Dorsolateral prefrontal cortex (tissue), 120 donors: ENCODE measurements at regions of chrX and their contacts with region 1.

Region 1: DNA sequence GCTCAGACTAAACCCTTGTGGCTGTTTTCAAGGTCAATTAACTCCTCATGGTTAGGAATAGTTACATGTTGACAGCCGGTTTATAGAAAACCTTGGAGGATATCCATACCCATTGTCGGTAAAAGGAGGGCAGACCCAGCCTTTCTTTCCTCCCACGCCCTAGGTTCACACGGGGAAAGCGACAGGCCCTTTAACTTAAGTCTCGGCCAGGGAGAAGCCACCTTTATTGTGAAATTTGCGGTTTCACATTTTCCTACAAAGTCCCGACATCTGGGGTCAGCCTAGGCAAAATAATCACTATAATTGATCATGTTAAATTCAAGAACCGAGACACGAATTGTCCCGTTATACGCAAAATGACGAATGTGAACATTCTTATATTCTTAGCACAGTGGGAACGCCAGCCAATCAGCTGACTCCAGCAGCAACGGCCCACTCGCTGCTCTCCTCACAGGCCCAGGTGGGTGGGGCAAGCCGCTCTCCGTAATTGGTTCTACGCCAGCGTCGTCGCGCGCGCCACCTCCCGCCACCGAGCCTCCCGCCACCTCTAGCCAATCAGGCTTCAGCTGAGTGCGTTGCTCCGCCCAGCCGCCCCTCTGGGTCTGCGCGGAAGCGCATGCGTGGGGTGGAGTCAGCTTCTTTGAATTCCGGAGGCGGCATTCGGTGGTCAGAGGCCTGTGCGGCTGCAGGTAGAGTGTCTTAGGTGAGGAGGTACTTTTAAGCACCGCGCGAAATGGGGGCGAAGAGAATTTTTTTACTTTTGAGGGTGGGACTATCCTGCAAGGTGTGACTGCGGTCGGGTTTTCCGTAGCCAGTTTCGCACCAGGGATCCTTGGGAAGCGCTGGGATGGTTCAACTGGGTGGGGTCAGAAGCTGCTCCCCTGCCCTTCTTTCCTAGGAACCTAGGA is at the start of gene CENPI:
- DNase-seq: peak; percentile 75 to 93 (median 90)
- H3K4me3 ChIP-seq: peak within 1 kb of the TSS; percentile 3 to 68 (median 55)
- H3K27ac ChIP-seq: peak within 1 kb of the TSS in 48 of 59 donors; percentile 2 to 91 (median 70)
- H3K27me3 ChIP-seq: peaks cover 0 to 43% (median 3%) of the 10 kb centered on the region in 45 donors
- CTCF ChIP-seq: peak in 13 of 56 donors; percentile 4 to 35 (median 21)
- total RNA-seq, gene CENPI: 0.75 to 4.4 (median 2.0) TPM

Region 2: GRCh38 chrX:100812216-100813158 is 285.3 kb before region 1 on chrX:
- intact Hi-C with region 1: loop called in 1 of 2 experiments (anchors 5 kb)
- DNase-seq: no peak
- H3K4me3 ChIP-seq: no peak overlapping the region
- H3K27ac ChIP-seq: no peak overlapping the region
- H3K27me3 ChIP-seq: peaks cover 0 to 70% (median 19%) of the 10 kb centered on the region in 45 donors
- CTCF ChIP-seq: no peak

Region 3: GRCh38 chrX:101051549-101052302 is 46.1 kb before region 1 on chrX and contains the start of gene TRMT2B:
- intact Hi-C with region 1: loop called in 1 of 2 experiments (anchors 5 kb)
- DNase-seq: peak; percentile 28 to 77 (median 64)
- H3K4me3 ChIP-seq: peak within 1 kb of the TSS; percentile 29 to 78 (median 64)
- H3K27ac ChIP-seq: peak within 1 kb of the TSS in 44 of 59 donors; percentile 13 to 83 (median 60)
- H3K27me3 ChIP-seq: peaks cover 0 to 34% (median 0%) of the 10 kb centered on the region in 45 donors
- CTCF ChIP-seq: no peak
- total RNA-seq, gene TRMT2B: 10.1 to 22.8 (median 16.6) TPM

Region 4: DNA sequence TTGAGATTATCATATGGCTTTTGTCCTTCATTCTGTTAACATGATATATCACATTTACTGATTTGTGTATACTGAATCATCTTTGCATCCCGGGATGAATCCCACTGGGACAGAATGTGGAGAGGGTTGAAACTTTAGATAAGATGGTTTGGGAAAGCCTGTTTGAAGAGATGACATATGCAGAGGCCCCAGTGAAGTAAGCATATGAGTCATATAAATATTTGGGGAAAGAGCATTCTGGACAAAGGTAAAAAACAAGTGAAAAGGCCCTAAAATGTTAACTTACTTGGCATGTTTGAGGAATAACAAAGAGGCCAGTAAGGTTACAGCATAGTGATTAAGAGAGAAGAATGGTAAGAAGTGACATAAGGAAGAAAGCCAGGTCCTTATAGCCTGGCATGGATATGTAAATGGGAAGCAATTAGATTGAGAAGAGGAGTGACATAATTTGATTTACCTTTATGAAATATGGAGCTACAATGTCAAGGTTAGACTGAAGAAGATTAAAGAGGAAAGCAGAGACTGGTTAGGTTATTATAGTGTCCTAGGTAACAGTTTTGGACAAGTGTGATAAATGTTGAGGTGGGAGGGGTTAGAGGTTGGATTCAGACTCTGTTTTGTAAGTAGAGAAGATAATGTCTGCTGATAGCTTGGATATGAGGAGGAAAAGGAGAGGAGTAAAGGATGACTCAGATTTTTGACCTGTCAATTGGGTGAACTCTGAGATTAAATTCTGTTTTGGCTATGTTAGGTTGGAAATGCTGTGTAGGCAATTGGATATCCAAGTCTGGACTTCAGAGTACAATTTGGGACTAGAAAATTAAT is 67.2 kb after region 1 on chrX:
- intact Hi-C with region 1: no loop called
- DNase-seq: no peak
- H3K4me3 ChIP-seq: no peak overlapping the region
- H3K27ac ChIP-seq: no peak overlapping the region
- H3K27me3 ChIP-seq: peaks cover 0 to 68% (median 13%) of the 10 kb centered on the region in 45 donors
- CTCF ChIP-seq: no peak

Region 5: DNA sequence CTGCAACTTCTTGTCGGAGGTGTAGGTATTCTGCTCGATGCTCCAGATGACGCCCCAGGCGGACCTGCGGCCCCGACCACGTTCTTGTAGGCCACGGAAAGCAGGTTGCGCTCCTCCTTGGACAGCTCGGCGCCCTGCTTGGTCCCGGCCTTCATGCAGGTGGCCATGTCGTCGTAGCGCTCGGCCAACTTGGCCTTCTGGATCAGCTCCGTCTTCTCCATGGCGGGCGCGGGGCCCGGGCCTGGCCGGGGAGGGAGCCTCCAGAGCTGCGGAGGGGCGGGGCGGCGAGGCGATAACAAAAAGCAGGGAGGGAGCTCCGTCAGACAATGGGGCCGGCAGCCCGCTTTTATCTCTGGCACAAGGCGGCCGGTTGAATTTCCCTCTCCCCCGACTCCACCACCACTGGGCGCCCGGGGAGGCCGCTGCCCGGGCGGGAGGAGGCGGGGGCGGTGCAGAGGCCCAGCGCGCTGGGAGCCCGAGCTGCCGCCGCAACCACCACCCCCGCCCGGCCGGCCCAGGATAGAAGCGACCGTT is 93.5 kb after region 1 on chrX:
- intact Hi-C with region 1: no loop called
- DNase-seq: peak in 2 of 10 donors; percentile 3 to 33
- H3K4me3 ChIP-seq: peak overlapping the region in 33 of 59 donors; percentile 2 to 46 (median 23)
- H3K27ac ChIP-seq: no peak overlapping the region
- H3K27me3 ChIP-seq: peaks cover 0 to 77% (median 27%) of the 10 kb centered on the region in 45 donors
- CTCF ChIP-seq: no peak

Region 6: DNA sequence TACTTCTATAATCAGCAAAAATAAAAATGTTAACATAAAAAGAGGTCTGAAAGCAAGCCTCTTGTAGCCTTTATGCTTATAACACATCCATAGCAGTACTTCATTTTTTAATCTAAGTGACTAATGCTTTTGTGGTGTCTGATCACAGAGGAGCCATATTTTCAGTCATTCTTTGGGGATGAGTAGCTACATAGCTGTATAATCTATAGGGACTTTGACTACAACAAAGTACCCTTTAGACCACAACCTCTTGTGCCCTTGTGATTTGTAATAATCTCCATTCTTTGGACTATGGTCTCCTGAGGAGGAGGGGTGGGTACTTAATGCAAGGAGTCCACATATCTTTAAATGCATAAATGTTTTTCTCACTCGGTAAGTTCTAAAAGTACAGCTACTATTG is 131.4 kb after region 1 on chrX:
- intact Hi-C with region 1: no loop called
- DNase-seq: no peak
- H3K4me3 ChIP-seq: no peak overlapping the region
- H3K27ac ChIP-seq: peak overlapping the region in 7 of 59 donors; percentile 12 to 60 (median 22)
- H3K27me3 ChIP-seq: peaks cover 0 to 89% (median 33%) of the 10 kb centered on the region in 45 donors
- CTCF ChIP-seq: no peak

Region 7: DNA sequence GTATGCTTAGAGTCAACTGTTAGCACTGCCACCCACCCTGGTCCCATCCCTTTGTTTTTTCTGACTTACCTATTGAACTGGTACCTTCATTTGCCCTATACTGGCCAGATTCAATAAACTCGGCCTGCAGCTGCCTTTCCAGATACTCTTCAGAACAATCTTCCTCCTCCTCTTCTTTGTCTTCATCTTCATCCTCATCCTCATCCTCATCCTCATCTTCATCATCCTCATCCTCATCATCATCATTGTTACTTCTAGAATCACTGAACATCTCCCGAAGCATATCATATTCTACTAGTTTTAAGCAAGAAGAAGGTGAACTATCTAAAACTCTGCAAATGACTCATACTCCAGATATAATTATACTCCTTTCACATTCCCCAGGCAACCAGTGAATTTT is 178.4 kb after region 1 on chrX:
- intact Hi-C with region 1: no loop called
- DNase-seq: no peak
- H3K4me3 ChIP-seq: no peak overlapping the region
- H3K27ac ChIP-seq: no peak overlapping the region
- H3K27me3 ChIP-seq: peaks cover 0 to 74% (median 10%) of the 10 kb centered on the region in 45 donors
- CTCF ChIP-seq: no peak